ENCODE measurements at regions of chr9 and their contacts with region 1.

Region 1: DNA sequence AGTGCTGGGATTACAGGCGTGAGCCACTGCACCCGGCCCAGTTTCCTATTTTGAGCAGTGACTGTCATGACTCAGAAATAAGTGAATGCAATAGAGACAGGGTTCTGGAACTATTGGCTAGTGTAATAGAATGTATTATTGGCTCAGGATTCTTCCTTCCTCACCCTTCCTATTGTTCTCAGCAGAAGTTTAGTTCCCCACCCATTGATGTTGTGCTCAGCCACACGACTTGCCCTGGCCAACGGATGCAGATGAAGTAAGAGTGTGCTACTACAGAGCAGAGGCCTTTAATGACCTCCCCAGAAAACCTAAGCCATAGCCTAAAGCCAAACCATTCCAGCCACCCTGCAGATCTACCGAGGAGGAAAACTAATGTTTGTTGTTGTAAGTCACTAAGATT is 287.9 kb downstream of the AGTPBP1 start:
- DNase-seq: no peak
- ATAC-seq: peak; percentile 34

Region 2: DNA sequence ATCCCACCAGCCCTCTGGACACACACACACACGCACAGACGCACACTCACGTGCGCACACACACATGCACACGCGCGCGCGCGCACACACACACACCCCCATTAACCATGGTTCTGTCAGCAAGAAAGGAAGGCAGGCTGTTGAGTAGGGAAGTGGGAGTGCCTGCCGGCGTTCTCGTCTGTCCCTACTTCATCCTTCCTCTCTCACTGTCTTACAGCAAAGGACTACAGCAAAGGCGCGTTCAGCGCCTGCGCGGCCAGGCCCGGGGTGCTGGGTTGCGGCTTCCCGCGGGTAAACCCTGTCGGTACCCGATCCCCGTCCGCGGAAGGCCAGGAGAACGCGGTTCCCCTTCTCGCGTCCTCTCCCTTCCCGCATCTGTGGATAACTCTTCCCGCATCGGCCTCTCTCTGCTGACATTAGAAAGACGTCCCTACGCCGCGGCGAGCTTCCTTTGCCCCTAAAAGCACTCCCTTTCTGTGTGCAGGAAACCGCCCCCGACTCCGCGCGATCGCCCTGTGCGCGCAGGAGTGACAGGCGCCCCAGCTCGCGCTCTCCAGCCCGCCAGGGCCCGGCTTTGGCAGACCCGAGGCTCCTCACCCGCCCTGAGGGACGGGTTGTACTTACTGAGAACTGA is 68.7 kb after region 1 on chr9:
- intact Hi-C with region 1: loop called (anchors 10 kb)
- DNase-seq: peak; percentile 85
- ATAC-seq: peak; percentile 75

Region 3: DNA sequence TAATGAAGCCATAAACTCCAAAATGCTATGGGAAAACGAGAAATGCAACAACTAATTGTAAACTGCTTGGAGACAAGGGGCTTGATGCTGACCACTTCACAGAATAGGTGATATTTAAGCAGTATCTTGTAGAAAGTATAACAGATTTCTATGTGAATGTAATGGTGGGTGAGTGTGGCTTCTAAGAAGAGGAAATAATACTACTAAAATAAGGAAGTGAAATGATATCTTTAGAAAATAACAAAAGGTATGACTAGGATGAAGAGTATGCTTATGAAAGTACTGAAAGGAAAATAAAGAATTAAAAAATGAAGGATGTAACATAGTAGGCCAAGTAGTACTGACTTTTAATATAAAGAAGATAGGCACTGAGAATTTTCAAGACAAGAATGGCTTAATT is 193.7 kb after region 1 on chr9:
- intact Hi-C with region 1: no loop called
- DNase-seq: no peak
- ATAC-seq: no peak